ENCODE measurements at regions of chr15 and their contacts with region 1.

Region 1: DNA sequence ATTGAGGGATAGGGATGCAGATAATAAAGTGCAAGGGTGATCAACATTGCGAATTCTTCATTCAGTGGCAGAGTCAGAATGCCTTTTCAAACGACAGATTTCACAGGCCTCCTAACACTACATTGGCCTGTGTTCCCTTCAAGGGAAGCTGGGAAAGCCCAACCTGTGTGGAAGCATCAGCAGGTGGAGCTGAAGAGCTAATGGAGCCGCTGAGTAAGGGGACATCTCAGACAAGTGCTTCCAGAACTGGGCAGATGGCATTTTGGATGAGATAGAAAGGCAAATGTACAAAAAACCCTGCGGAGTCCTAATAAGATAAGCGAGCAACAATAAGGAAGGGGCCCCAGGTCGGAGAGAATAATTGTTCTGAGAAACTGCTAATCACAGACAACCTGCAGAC is 8.5 kb upstream of the SLC24A5 start:
- DNase-seq: peak; percentile 30
- ATAC-seq: peak; percentile 56
- H3K4me3 ChIP-seq: no peak overlapping the region
- H3K27ac ChIP-seq: no peak overlapping the region
- H3K4me1 ChIP-seq: no peaks in the 10 kb centered on the region
- H3K27me3 ChIP-seq: peaks cover 19% of the 10 kb centered on the region
- CTCF ChIP-seq: peak; percentile 44
- POLR2A ChIP-seq: no peak
- RAD21 ChIP-seq: peak; percentile 67

Region 2: GRCh38 chr15:48096355-48096786 is 15.9 kb before region 1 on chr15:
- CTCF ChIA-PET with region 1: no interaction called
- POLR2A ChIA-PET with region 1: no interaction called
- dilution Hi-C with region 1: no loop called
- in situ Hi-C with region 1: no loop called
- intact Hi-C with region 1: no loop called
- DNase-seq: no peak
- ATAC-seq: peak; percentile 17; the same call in 1 of the 2 replicates
- H3K4me3 ChIP-seq: no peak overlapping the region
- H3K27ac ChIP-seq: no peak overlapping the region
- H3K4me1 ChIP-seq: peaks cover 1% of the 10 kb centered on the region; the same call in 1 of the 2 replicates
- H3K27me3 ChIP-seq: peaks cover 15% of the 10 kb centered on the region
- CTCF ChIP-seq: no peak
- POLR2A ChIP-seq: no peak
- RAD21 ChIP-seq: no peak

Region 3: DNA sequence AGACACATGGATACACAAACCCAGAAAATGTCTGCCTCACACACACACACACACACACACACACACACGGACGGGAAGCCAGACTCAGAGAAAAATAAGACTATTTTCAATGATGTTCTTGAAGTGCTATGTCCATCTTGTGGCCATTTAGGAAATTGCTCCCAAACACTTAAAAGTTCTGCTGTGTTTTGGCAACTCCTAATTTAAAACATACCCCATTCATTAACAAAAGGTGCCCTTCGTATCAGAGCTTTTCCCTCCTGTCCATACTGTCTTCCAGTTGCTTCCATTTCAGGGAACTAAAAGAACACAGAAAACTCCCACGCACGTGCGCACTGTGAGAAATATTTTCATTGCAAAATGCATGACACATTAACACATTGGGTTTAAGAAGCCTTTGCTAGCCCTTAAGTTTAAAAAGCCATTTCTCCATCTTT is 138.4 kb after region 1 on chr15:
- CTCF ChIA-PET with region 1: no interaction called
- POLR2A ChIA-PET with region 1: no interaction called
- dilution Hi-C with region 1: no loop called
- in situ Hi-C with region 1: no loop called
- intact Hi-C with region 1: loop called (anchors 2 kb)
- DNase-seq: peak; percentile 79
- ATAC-seq: peak; percentile 82
- H3K4me3 ChIP-seq: no peak overlapping the region
- H3K27ac ChIP-seq: no peak overlapping the region
- H3K4me1 ChIP-seq: no peaks in the 10 kb centered on the region
- H3K27me3 ChIP-seq: peaks cover 6% of the 10 kb centered on the region
- CTCF ChIP-seq: peak; percentile 75
- POLR2A ChIP-seq: no peak
- RAD21 ChIP-seq: peak; percentile 77